ENCODE measurements at regions of chr20 and their contacts with region 1.

Region 1: DNA sequence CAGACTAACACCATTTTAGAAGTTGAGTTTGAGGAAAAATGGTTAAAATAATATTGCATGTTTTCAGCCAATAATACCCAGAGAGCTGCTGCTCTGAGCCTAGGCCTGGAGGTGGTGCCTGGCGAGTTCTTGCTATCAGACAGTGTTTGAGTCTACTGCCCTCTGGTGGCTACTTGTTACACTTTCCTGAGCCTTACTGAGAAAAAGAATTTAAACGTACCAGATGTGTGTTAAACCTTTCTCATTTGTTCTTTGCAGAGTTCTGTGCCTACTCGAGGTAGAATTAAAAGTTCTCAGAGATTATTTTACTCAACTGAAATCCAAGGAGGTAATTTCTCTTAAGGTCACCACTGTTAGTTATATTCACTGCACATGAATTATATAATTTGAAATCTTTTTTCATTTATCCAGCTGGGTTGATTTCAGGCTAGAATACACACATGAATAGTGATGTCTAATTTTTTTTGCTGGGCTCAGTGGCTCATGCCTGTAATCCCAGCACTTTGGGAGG is 38.2 kb downstream of the SHLD1 start:
- DNase-seq: peak; percentile 89
- H3K4me3 ChIP-seq: no peak overlapping the region
- H3K27ac ChIP-seq: no peak overlapping the region
- H3K4me1 ChIP-seq: peaks cover 7% of the 10 kb centered on the region
- H3K27me3 ChIP-seq: no peaks in the 10 kb centered on the region
- CTCF ChIP-seq: peak; percentile 90

Region 2: DNA sequence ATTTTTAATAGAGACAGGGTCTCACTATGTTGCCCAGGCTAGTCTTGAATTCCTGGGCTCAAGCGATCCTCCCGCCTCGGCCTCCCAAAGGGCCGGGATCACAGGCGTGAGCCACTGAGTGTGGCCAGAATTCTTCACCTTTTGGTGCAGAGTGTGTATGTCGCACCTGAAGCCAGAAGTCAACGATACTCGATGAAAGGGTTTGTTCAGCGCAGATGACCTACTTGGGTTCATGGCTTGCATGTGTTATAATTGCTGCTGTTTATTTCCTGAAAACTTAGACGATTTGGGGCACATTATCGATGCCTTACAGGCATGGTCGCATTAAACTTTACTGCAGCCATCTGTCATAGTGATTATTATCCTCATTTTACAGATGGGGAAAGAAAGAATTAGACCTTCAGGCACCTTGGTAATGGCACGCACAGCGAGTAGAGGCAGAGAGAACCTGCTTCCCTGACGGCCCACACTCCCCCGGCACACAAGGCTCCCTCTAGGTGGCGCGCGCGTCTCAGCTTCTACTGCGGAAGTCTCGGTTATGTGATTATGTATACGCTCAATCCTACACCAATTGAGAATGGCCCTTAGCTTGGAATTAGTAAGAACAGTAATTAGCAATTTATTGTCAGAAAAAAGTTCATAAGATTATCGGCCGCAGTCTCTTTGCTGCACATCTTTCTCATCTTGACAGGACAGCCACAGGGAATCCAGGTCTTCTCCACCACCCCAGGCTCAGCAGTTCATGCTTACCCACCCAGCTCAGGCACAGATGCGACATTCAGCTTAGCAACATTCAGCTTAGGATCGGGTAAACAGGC is 258.9 kb before region 1 on chr20:
- CTCF ChIA-PET with region 1: interaction called, 34 read pairs
- POLR2A ChIA-PET with region 1: no interaction called
- intact Hi-C with region 1: loop called (anchors 1 kb)
- DNase-seq: peak; percentile 88
- H3K4me3 ChIP-seq: peak overlapping the region; percentile 5
- H3K27ac ChIP-seq: no peak overlapping the region
- H3K4me1 ChIP-seq: no peaks in the 10 kb centered on the region
- H3K27me3 ChIP-seq: peaks cover 3% of the 10 kb centered on the region
- CTCF ChIP-seq: peak; percentile 98

Region 3: DNA sequence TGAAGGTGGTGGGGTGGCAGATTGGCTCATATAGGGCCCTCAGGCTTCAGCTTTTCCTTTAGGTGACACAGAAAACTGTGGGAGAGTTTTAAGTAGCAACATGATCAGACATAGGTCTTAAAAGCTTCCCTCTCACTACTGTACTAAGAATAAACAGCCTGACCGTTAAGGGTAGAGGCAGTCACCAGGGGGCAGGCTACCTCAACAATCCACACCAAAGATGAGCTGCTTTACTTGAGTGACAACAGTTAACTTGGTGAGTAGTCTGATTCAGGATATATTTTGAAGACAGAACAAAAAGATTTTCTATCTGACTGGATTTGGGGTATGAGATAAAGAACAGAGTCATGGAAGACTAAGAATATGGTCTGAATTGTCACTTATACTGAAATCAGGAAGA is 231.3 kb before region 1 on chr20:
- CTCF ChIA-PET with region 1: interaction called, 14 read pairs
- POLR2A ChIA-PET with region 1: no interaction called
- intact Hi-C with region 1: no loop called
- DNase-seq: peak; percentile 47
- H3K4me3 ChIP-seq: no peak overlapping the region
- H3K27ac ChIP-seq: no peak overlapping the region
- H3K4me1 ChIP-seq: no peaks in the 10 kb centered on the region
- H3K27me3 ChIP-seq: no peaks in the 10 kb centered on the region
- CTCF ChIP-seq: peak; percentile 65

Region 4: GRCh38 chr20:5569021-5569420 is 219.4 kb before region 1 on chr20:
- CTCF ChIA-PET with region 1: interaction called, 15 read pairs
- POLR2A ChIA-PET with region 1: no interaction called
- intact Hi-C with region 1: loop called (anchors 1 kb)
- DNase-seq: peak; percentile 70
- H3K4me3 ChIP-seq: no peak overlapping the region
- H3K27ac ChIP-seq: no peak overlapping the region
- H3K4me1 ChIP-seq: no peaks in the 10 kb centered on the region
- H3K27me3 ChIP-seq: no peaks in the 10 kb centered on the region
- CTCF ChIP-seq: peak; percentile 66

Region 5: DNA sequence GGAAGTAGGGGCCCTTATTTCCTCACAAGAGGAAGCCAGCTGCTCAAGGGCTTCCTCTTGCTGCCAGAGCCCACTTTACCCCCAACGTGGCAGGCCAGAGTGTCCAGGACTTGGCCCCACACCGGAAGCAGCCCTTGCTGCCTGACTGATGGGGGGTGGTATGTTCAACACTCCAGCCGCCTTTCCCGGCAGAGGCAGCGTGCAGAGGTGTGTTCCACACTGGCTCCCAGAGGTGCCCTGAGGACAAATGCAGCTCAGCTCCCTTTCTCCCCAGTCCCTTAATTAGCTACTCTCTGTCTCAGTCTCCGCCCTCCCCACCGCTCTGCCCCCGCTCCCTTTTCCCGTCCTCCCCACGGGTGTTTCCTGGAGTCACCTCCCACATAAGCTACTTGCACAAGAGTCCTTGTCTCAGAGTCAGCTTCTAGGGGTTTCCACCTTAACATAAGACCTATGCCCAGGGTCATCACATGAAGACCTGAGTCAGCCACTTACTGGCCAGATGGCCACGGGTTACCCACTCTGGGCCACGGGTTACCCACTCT is 99.9 kb before region 1 on chr20:
- CTCF ChIA-PET with region 1: no interaction called
- POLR2A ChIA-PET with region 1: no interaction called
- intact Hi-C with region 1: no loop called
- DNase-seq: no peak
- H3K4me3 ChIP-seq: no peak overlapping the region
- H3K27ac ChIP-seq: no peak overlapping the region
- H3K4me1 ChIP-seq: no peaks in the 10 kb centered on the region
- H3K27me3 ChIP-seq: no peaks in the 10 kb centered on the region
- CTCF ChIP-seq: no peak

Measured in A673 (cell line).